Activated CD8-positive, alpha-beta memory T cell treated with anti-CD3 and anti-CD28 coated beads, Interleukin-2, amount 10 ng/mL, durations not matched to agents 7 days and 5 days (primary cell): ENCODE measurements at regions of chr17 and their contacts with region 1.

Region 1: GRCh38 chr17:48011405-48012150 is 26.0 kb downstream of the COPZ2 start:
- DNase-seq: peak; percentile 83
- ATAC-seq: peak; percentile 85
- H3K4me3 Mint-ChIP-seq: peak overlapping the region; percentile 76
- H3K27ac Mint-ChIP-seq: peak overlapping the region; percentile 72
- H3K4me1 Mint-ChIP-seq: peaks cover 19% of the 10 kb centered on the region
- H3K27me3 Mint-ChIP-seq: peaks cover 36% of the 10 kb centered on the region

Region 2: DNA sequence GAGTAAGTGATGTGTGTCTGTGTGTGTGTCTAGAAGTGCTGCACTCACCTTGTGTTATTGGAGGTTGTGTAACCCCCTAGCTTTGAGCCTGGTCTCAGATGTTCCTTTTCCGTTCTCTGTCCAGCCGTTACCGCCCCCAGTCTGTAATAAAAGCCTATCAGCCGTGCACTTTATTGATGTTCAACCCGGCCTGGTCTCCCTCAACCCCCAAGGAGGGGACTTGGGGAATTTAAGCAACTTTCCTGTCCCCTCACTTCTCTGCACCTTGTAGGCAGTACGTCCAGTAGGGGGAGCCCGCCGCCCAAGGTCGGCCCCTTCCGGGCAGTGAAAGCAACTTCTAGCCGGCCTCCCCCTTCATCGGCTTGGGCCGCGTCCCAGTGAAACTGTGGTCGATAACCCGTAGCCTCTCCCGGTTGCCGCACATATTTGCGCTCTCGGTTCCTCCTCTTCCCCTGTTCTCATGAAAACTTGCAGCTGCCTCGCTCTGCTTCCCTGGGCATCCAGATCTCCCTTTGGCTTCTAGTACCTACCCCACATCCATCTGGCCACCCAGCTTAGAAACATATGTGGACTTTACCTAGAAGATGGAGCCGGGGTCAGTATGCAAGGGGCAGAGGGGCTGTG is 62.3 kb before region 1 on chr17:
- CTCF ChIA-PET with region 1: interaction called, 102 read pairs
- DNase-seq: peak; percentile 90
- ATAC-seq: peak; percentile 80
- H3K4me3 Mint-ChIP-seq: peak overlapping the region; percentile 55
- H3K27ac Mint-ChIP-seq: peak overlapping the region; percentile 78
- H3K4me1 Mint-ChIP-seq: peaks cover 40% of the 10 kb centered on the region
- H3K27me3 Mint-ChIP-seq: no peaks in the 10 kb centered on the region

Region 3: DNA sequence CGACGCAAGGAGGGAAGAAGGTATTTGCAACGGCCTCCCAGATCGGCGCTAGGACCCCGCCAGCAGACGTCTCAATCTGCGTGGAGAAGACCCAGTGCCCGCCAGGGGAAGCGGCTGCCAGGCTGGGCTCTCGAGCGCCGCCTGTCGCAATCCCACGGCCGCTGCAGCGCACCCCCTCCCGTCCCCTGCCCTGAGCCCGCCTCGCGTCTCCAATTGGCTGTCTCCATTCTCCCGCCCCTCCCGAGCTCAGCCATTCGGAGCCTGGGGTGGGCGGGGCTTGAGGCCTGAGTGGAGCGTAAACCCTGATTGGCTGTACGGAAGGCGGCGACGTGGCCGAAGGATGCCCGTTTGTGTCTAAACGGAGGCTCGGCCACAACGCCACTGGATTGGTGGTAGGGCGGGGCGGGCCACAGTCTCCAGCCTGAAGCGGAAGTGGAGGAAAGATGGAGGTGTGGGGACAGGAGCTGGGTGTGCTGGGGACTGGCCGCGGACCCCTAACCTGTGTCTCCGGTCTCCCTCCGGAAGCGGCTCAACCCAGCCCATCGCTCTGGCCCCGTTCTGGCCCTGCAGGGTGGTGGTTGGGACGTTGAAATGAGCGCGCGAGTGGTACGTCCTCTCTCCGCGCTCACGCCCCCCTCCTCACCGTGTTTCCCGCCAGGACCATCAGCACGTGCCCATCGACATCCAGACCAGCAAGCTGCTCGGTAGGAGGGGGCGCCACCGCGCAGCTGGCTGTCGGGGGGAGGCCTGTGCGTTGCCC is 40.7 kb before region 1 on chr17 and contains the start of gene CDK5RAP3:
- CTCF ChIA-PET with region 1: interaction called, 71 read pairs
- DNase-seq: peak; percentile 100
- ATAC-seq: peak; percentile 97
- H3K4me3 Mint-ChIP-seq: peak within 1 kb of the TSS; percentile 93
- H3K27ac Mint-ChIP-seq: peak within 1 kb of the TSS; percentile 85
- H3K4me1 Mint-ChIP-seq: peaks cover 28% of the 10 kb centered on the region
- H3K27me3 Mint-ChIP-seq: peaks cover 2% of the 10 kb centered on the region
- total RNA-seq, gene CDK5RAP3: 215 to 262 TPM

Region 4: DNA sequence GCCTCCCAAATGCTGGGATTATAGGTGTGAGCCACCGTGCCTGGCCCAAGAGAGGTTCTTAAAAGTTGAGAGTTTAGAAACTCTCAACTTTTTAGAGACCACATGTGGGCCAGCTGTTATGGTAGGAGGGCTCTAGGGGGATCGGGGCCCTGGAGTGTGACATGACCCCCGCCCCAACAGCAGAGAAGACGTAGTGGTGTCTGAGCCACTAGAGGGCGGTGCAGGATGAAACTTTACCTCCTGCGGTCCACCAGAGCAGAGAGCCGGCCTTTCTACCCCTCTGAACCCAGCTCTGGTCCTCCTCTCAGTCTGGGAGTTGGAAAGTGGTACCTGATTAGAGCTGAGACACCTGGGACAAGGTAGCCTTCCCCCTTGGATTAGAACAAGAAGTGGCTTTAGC is 33.3 kb before region 1 on chr17:
- CTCF ChIA-PET with region 1: interaction called, 98 read pairs
- DNase-seq: peak; percentile 76
- ATAC-seq: peak; percentile 83
- H3K4me3 Mint-ChIP-seq: no peak overlapping the region
- H3K27ac Mint-ChIP-seq: no peak overlapping the region
- H3K4me1 Mint-ChIP-seq: peaks cover 30% of the 10 kb centered on the region
- H3K27me3 Mint-ChIP-seq: no peaks in the 10 kb centered on the region

Region 5: DNA sequence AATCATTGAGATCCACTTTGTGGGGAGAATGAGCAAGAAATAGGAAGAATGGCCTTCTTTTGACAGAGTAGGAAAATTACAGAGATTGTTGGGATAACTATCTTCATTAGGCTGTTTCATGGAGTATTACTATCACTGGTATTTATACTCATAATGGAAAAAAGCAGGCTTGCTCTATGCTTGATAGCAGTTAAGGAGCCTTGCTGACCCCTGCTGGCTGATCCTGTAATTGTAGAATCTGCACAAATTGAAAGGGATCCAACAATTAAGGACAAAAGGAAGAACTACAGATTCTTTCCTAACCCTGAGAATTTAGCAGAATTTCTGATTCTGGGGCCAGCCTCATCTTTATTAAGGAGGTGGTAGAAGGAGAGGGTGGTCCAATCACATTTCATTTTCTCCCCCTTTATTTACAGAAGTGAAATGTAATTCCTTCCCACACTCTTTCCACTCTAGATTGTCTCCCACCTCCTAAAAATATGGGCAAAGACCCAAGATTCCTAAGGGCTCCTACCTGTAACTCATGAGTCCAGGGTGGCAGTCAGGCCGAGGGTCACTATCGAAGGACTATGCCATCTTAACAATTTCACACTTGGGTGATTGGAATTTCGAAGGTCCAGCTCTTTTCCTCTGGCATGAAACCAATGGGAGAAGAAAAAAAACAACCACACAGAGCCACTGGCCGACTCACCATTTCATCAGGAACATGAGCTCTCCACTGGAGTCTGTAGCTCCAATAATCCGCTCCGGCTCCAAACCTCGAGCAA is 62.9 kb after region 1 on chr17:
- CTCF ChIA-PET with region 1: interaction called, 11 read pairs
- DNase-seq: peak; percentile 83
- ATAC-seq: peak; percentile 84
- H3K4me3 Mint-ChIP-seq: no peak overlapping the region
- H3K27ac Mint-ChIP-seq: no peak overlapping the region
- H3K4me1 Mint-ChIP-seq: no peaks in the 10 kb centered on the region
- H3K27me3 Mint-ChIP-seq: no peaks in the 10 kb centered on the region